CD8-positive, alpha-beta T cell (primary cell): ENCODE measurements at regions of chr19 and their contacts with region 1.

Region 1: GRCh38 chr19:9323919-9324583 is at the start of gene ZNF559:
- DNase-seq: peak; percentile 95 to 99 (median 98)
- ATAC-seq: peak; percentile 95
- H3K4me3 ChIP-seq: peak within 1 kb of the TSS; percentile 75 to 78
- H3K4me3 Mint-ChIP-seq: peak within 1 kb of the TSS; percentile 88
- H3K27ac ChIP-seq: peak within 1 kb of the TSS; percentile 62 to 83
- H3K27ac Mint-ChIP-seq: peak within 1 kb of the TSS; percentile 87
- H3K4me1 ChIP-seq: peaks cover 12% of the 10 kb centered on the region
- H3K4me1 Mint-ChIP-seq: peaks cover 38% of the 10 kb centered on the region
- H3K27me3 ChIP-seq: no peaks in the 10 kb centered on the region
- H3K27me3 Mint-ChIP-seq: no peaks in the 10 kb centered on the region
- CTCF ChIP-seq: peak; percentile 39
- total RNA-seq, gene ZNF559: 4.0 to 4.5 TPM

Region 2: DNA sequence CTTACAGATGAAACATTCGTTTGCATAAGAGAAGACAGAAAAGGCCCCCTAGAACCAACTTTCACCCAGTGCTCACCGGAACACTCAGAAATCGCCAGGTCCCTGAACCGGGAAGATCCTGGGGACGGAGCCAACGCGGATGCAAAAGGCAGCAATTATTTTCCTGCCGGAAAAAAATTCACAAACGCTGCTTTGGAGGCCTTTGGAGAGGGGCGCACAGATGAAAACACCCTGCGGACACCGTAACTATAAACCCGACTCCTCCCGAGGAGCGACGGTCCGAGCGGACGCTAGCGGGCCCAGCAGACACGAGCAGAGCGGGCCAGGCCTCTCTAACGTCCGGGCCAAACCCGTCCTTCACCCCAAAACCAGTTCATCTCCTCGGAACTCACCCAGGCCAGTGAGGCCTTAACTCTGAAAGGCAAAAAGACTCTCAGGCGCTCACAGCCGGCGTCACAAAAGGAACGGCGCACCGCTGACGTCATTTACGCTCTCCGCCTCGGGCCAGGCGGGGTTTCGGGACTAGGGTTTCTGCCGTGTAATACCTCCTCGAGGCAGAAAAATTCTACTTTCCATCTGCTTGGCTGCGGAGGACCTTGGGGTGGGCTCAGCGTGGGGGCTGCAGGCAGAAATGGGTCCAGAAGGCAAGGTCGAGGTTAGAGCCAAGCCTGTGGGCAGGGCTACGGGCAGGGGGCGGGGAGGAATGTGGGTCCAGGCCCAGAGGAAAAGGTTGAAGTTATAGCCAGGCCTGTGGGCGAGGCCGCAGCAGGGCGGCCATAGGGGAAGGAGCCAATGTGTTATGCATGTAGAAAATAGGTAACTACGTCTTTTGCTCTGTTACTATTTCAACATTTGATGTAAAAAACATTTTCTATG is 214.4 kb after region 1 on chr19 and contains the start of gene ZNF426:
- CTCF ChIA-PET with region 1: no interaction called
- POLR2A ChIA-PET with region 1: no interaction called
- intact Hi-C with region 1: loop called in 1 of 2 experiments (anchors 5 kb)
- DNase-seq: peak; percentile 77 to 92 (median 86)
- ATAC-seq: peak; percentile 94
- H3K4me3 ChIP-seq: peak within 1 kb of the TSS; percentile 89 to 93
- H3K4me3 Mint-ChIP-seq: peak within 1 kb of the TSS; percentile 99
- H3K27ac ChIP-seq: peak within 1 kb of the TSS; percentile 91
- H3K27ac Mint-ChIP-seq: peak within 1 kb of the TSS; percentile 100
- H3K4me1 ChIP-seq: peaks cover 17% of the 10 kb centered on the region
- H3K4me1 Mint-ChIP-seq: peaks cover 35% of the 10 kb centered on the region
- H3K27me3 ChIP-seq: no peaks in the 10 kb centered on the region
- H3K27me3 Mint-ChIP-seq: no peaks in the 10 kb centered on the region
- CTCF ChIP-seq: no peak
- total RNA-seq, gene ZNF426: 16.6 to 17.9 TPM

Region 3: GRCh38 chr19:9674663-9675357 is 350.8 kb after region 1 on chr19 and contains the start of gene ZNF562:
- CTCF ChIA-PET with region 1: no interaction called
- POLR2A ChIA-PET with region 1: no interaction called
- intact Hi-C with region 1: loop called in 1 of 2 experiments (anchors 10 kb)
- DNase-seq: peak; percentile 60 to 89 (median 81)
- ATAC-seq: peak; percentile 81
- H3K4me3 ChIP-seq: peak within 1 kb of the TSS; percentile 65 to 90
- H3K4me3 Mint-ChIP-seq: peak within 1 kb of the TSS; percentile 97
- H3K27ac ChIP-seq: peak within 1 kb of the TSS; percentile 80 to 84
- H3K27ac Mint-ChIP-seq: peak within 1 kb of the TSS; percentile 99
- H3K4me1 ChIP-seq: no peaks in the 10 kb centered on the region
- H3K4me1 Mint-ChIP-seq: peaks cover 23% of the 10 kb centered on the region
- H3K27me3 ChIP-seq: no peaks in the 10 kb centered on the region
- H3K27me3 Mint-ChIP-seq: no peaks in the 10 kb centered on the region
- CTCF ChIP-seq: no peak
- total RNA-seq, gene ZNF562: 13.6 to 16.5 TPM